PC-9 (cell line): ENCODE measurements at regions of chrX and their contacts with region 1.

Region 1: DNA sequence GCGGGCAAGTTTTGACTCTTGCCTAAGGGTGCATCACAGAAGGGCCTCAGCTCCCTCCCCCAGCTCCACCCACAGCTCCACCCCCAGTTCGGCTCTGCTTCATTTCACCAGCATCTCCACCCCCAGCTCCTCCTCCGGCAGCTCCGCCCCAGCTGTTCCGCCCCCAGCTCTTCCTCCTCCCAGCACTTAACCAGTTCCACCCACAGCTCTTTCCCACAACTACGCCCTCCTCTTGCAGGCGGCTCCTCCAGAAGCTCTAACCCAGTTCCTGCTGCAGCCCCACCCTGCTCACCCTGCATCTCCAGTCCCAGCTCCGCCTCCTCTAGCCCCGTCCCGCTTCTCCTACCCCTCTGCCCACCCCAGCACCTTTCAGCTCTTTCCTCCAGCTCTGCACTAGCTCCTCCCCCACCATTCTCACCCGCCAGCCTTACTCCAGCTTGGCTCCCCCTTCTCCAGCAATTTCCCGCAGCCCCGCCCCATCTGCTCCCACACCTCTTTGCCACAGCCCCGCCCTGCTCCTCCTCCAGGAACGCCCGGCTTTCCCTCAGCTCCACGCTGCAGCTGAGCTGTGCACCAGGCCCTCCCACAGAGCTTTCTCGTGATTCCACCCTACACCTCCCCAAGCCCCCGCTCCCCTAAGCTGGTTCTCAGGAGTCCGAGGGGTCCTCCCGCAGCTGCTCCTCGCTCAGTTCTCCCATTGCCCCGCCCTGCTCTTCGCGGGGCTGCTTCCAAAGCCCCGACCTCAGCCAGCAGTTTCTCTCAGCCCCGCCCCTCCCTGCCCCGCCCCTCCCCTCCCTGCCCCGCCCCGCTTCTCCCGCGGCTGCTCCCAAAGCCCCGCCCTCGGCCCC is 1.3 kb upstream of the EOLA1 start:
- DNase-seq: peak; percentile 95
- H3K4me3 ChIP-seq: peak overlapping the region; percentile 68
- H3K27ac ChIP-seq: peak overlapping the region; percentile 62
- H3K4me1 ChIP-seq: peaks cover 8% of the 10 kb centered on the region
- H3K27me3 ChIP-seq: no peaks in the 10 kb centered on the region
- CTCF ChIP-seq: no peak

Region 2: GRCh38 chrX:149296092-149296491 is 243.4 kb before region 1 on chrX:
- CTCF ChIA-PET with region 1: no interaction called
- POLR2A ChIA-PET with region 1: no interaction called
- intact Hi-C with region 1: no loop called
- DNase-seq: no peak
- H3K4me3 ChIP-seq: no peak overlapping the region
- H3K27ac ChIP-seq: no peak overlapping the region
- H3K4me1 ChIP-seq: no peaks in the 10 kb centered on the region
- H3K27me3 ChIP-seq: 0 out of 2 replicates have a peak, but pooled peaks cover 4% of the 10 kb centered on the region
- CTCF ChIP-seq: no peak

Region 3: DNA sequence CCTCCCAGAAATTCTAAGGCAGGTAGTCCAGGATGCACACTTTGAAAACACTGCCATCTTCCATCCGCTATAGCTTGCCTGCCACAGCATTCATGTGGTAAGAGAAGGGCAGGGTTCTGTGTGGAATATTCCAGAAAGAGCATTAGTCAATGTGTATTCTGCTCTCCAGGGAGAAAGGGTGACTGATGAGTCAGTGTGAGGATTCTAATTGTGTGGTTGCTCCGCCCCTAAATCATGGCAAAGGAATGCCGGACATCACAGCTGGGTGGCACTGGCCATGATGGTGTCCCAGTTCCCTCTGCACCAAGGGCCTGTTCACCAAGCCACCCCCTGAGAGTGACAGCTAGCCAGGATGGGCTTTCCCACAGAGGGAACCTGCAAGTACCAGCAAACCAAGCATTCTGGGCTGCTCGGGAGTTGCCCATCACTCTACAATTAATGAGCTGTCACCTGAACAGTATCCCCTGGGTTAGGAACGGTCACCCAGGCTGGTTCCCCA is 43.9 kb before region 1 on chrX:
- CTCF ChIA-PET with region 1: no interaction called
- POLR2A ChIA-PET with region 1: interaction called, 24 read pairs
- intact Hi-C with region 1: loop called (anchors 2 kb)
- DNase-seq: peak; percentile 85 to 96
- H3K4me3 ChIP-seq: no peak overlapping the region
- H3K27ac ChIP-seq: peak overlapping the region; percentile 86
- H3K4me1 ChIP-seq: peaks cover 80% of the 10 kb centered on the region
- H3K27me3 ChIP-seq: no peaks in the 10 kb centered on the region
- CTCF ChIP-seq: no peak

Region 4: DNA sequence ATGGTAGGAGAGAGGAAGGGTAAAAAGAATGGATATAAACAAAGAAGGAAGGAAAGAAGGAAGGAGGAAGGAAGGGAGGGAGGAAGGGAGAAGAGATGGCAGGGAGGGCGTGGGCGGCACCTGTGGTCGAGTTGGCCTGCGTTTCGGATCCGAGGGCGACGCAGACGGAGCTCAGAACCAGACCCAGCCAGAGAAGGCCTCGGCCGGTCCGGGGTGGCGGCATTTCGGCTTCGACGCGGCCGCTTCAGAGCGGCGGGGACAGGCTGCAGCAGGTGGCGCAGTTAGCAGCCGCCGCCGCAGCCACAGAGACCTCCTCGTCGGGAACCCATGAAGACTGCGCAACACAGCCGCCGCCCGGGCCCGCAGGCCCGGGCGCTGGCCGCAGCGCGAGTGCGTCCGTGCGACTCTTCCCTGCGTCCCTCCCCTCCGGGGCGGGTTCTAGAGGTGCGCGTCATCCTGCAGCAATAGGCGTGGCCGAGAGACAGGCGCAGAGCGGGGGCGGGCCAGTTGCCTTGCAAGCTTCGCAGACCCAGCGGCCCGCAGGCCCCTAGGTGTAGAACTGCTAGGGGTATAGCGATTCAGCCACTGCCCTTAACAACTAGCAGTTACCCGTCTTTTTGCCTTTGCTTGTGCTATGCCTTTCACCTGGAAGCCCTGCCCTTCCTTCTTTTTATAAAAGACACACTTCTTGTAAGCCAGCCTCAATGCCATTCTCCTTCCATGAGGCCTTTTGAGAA is 34.4 kb before region 1 on chrX and contains the start of gene IDS:
- CTCF ChIA-PET with region 1: interaction called, 13 read pairs
- POLR2A ChIA-PET with region 1: interaction called, 104 read pairs
- intact Hi-C with region 1: loop called (anchors 1 kb)
- DNase-seq: peak; percentile 91 to 93
- H3K4me3 ChIP-seq: peak within 1 kb of the TSS; percentile 72
- H3K27ac ChIP-seq: peak within 1 kb of the TSS; percentile 69
- H3K4me1 ChIP-seq: peaks cover 36% of the 10 kb centered on the region
- H3K27me3 ChIP-seq: no peaks in the 10 kb centered on the region
- CTCF ChIP-seq: no peak
- total RNA-seq, gene IDS: 169 and 214 TPM in 2 replicates

Region 5: GRCh38 chrX:149512225-149512885 is 27.2 kb before region 1 on chrX:
- CTCF ChIA-PET with region 1: interaction called, 13 read pairs
- POLR2A ChIA-PET with region 1: interaction called, 24 read pairs
- intact Hi-C with region 1: loop called (anchors 1 kb)
- DNase-seq: peak; percentile 71 to 81
- H3K4me3 ChIP-seq: no peak overlapping the region; the same call in 1 of the 2 replicates
- H3K27ac ChIP-seq: peak overlapping the region; percentile 85
- H3K4me1 ChIP-seq: peaks cover 44% of the 10 kb centered on the region
- H3K27me3 ChIP-seq: no peaks in the 10 kb centered on the region
- CTCF ChIP-seq: peak; percentile 84

Region 6: DNA sequence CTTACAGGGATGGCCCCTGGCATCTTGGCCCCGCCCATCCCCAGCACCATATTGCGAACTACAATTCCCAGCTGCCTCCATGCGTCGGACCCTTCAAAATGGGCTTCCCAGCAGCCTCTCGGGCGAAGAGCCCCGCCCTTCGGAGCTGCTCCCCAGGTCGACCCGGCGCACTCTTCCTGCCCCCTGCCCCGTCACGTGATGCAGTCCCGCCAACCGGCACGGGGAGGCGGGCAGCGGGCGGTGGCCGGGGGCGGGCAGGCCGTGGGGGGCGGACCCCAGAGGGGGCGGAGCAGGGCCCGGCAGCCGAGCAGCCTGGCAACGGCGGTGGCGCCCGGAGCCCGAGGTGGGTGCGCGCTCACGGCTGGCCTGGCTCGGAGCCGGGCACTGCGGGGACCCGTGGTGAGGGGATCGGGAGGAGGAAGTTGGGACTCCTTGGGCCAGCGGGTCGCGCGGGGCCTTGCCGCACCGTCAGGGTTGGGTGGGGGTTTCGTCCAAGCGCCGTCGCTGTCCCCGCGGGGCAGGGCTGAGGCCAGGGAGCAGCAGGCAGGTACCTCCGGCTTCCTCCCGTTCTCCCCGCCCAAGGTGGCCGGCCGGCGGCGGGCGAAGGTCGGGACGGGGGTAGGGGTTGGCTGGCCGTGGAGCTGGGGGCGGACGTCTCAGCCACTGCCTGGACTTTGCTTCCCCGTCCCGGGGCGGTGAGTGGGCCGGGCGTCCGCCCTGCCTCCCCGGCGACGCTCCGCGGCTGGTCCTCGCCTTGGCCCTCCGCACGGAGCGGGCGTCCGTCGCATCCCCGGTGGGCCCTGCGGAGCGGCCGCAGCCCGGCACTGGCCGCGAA is 1029.0 kb after region 1 on chrX and contains the start of gene MTM1:
- CTCF ChIA-PET with region 1: no interaction called
- POLR2A ChIA-PET with region 1: no interaction called
- intact Hi-C with region 1: loop called (anchors 10 kb)
- DNase-seq: peak; percentile 98
- H3K4me3 ChIP-seq: peak within 1 kb of the TSS; percentile 79
- H3K27ac ChIP-seq: no peak within 1 kb of the TSS
- H3K4me1 ChIP-seq: peaks cover 50% of the 10 kb centered on the region
- H3K27me3 ChIP-seq: no peaks in the 10 kb centered on the region
- CTCF ChIP-seq: no peak
- total RNA-seq, gene MTM1: 17.4 and 22.9 TPM in 2 replicates

Region 7: GRCh38 chrX:150693775-150694574 is 1154.5 kb after region 1 on chrX:
- CTCF ChIA-PET with region 1: no interaction called
- POLR2A ChIA-PET with region 1: interaction called, 4 read pairs
- intact Hi-C with region 1: loop called (anchors 10 kb)
- DNase-seq: peak; percentile 88 to 99
- H3K4me3 ChIP-seq: peak overlapping the region; percentile 75
- H3K27ac ChIP-seq: peak overlapping the region; percentile 93
- H3K4me1 ChIP-seq: peaks cover 50% of the 10 kb centered on the region
- H3K27me3 ChIP-seq: no peaks in the 10 kb centered on the region
- CTCF ChIP-seq: 0 out of 2 replicates have a peak, but pooled peaks have one; percentile 16